CD8-positive, alpha-beta memory T cell (primary cell): ENCODE measurements at regions of chr11 and their contacts with region 1.

Region 1: GRCh38 chr11:250740-251299 is 14.0 kb downstream of the PSMD13 start:
- DNase-seq: peak; percentile 65 to 86 (median 71)
- H3K4me3 ChIP-seq: no peak overlapping the region
- H3K4me3 Mint-ChIP-seq: peak overlapping the region in 1 of 7 donors; percentile 5
- H3K27ac ChIP-seq: no peak overlapping the region
- H3K27ac Mint-ChIP-seq: peak overlapping the region in 7 of 8 donors; percentile 62 to 90 (median 73)
- H3K4me1 ChIP-seq: peaks cover 5% of the 10 kb centered on the region
- H3K4me1 Mint-ChIP-seq: peaks cover 7 to 11% (median 9%) of the 10 kb centered on the region in 3 donors
- H3K27me3 ChIP-seq: no peaks in the 10 kb centered on the region
- H3K27me3 Mint-ChIP-seq: no peaks in the 10 kb centered on the region

Region 2: DNA sequence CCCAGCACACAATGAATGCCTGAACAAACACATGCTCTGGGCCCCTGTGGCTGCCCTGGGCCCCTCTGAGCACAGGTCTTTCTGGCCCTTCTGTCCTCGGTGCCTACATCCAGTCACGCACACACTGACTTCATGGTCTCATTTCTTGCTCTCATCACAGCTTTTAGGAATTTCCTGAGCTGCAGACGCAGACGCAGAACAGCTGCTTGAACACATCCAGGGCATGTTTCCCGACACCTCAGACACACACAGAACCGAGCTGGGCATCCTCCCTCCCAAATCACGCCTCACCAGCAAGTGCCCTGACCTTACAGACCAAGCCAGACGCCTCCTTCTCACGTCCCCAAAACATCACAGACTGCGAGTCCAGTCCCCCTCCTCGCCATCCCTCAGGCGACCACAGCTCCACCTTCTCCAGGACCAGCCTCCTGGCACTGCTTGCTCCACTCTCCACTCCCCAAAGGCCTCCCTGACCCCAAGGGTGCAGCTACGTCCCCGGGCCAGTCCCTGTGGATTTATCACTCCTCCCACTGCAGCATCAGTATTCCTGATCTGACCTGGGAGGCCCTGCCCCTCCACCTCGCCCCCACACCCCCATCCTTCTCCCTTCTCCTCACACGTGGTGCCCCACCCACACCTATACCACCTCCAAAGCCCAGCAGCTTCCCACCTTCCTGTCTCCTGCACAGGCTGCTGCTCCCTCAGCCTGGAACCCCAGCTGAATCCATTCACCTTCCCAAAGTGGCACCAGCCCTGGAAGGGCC is 27.6 kb before region 1 on chr11:
- CTCF ChIA-PET with region 1: no interaction called
- POLR2A ChIA-PET with region 1: no interaction called
- DNase-seq: no peak
- H3K4me3 ChIP-seq: no peak overlapping the region
- H3K4me3 Mint-ChIP-seq: peak overlapping the region in 1 of 7 donors; percentile 2
- H3K27ac ChIP-seq: no peak overlapping the region
- H3K27ac Mint-ChIP-seq: peak overlapping the region in 4 of 8 donors; percentile 5 to 89 (median 62)
- H3K4me1 ChIP-seq: no peaks in the 10 kb centered on the region
- H3K4me1 Mint-ChIP-seq: peaks cover 0 to 5% (median 1%) of the 10 kb centered on the region in 3 donors
- H3K27me3 ChIP-seq: no peaks in the 10 kb centered on the region
- H3K27me3 Mint-ChIP-seq: no peaks in the 10 kb centered on the region

Region 3: GRCh38 chr11:269146-269890 is 18.5 kb after region 1 on chr11:
- CTCF ChIA-PET with region 1: interaction called, 34 read pairs
- POLR2A ChIA-PET with region 1: interaction called, 12 read pairs
- DNase-seq: peak; percentile 24 to 88 (median 72)
- H3K4me3 ChIP-seq: peak overlapping the region; percentile 49
- H3K4me3 Mint-ChIP-seq: peak overlapping the region; percentile 84 to 94 (median 90)
- H3K27ac ChIP-seq: peak overlapping the region; percentile 78
- H3K27ac Mint-ChIP-seq: peak overlapping the region; percentile 89 to 100 (median 96)
- H3K4me1 ChIP-seq: peaks cover 22% of the 10 kb centered on the region
- H3K4me1 Mint-ChIP-seq: peaks cover 30 to 43% (median 31%) of the 10 kb centered on the region in 3 donors
- H3K27me3 ChIP-seq: no peaks in the 10 kb centered on the region
- H3K27me3 Mint-ChIP-seq: peaks cover 0 to 2% of the 10 kb centered on the region in 2 donors

Region 4: GRCh38 chr11:288328-289144 is 37.7 kb after region 1 on chr11 and contains the start of gene PGGHG:
- CTCF ChIA-PET with region 1: interaction called, 25 read pairs
- POLR2A ChIA-PET with region 1: interaction called, 11 read pairs
- DNase-seq: peak; percentile 55 to 71 (median 67)
- H3K4me3 ChIP-seq: peak within 1 kb of the TSS; percentile 74
- H3K4me3 Mint-ChIP-seq: peak within 1 kb of the TSS; percentile 94 to 99 (median 98)
- H3K27ac ChIP-seq: peak within 1 kb of the TSS; percentile 79
- H3K27ac Mint-ChIP-seq: peak within 1 kb of the TSS; percentile 93 to 99 (median 97)
- H3K4me1 ChIP-seq: peaks cover 27% of the 10 kb centered on the region
- H3K4me1 Mint-ChIP-seq: peaks cover 29 to 59% (median 35%) of the 10 kb centered on the region in 3 donors
- H3K27me3 ChIP-seq: no peaks in the 10 kb centered on the region
- H3K27me3 Mint-ChIP-seq: peaks cover 0 to 9% of the 10 kb centered on the region in 2 donors
- total RNA-seq, gene PGGHG: 81.0 to 81.2 TPM

Region 5: GRCh38 chr11:304915-305843 is 54.4 kb after region 1 on chr11:
- CTCF ChIA-PET with region 1: interaction called, 30 read pairs
- POLR2A ChIA-PET with region 1: no interaction called
- DNase-seq: peak in 3 of 5 donors; percentile 60 to 80 (median 64)
- H3K4me3 ChIP-seq: no peak overlapping the region
- H3K4me3 Mint-ChIP-seq: peak overlapping the region in 4 of 7 donors; percentile 1 to 78 (median 53)
- H3K27ac ChIP-seq: no peak overlapping the region
- H3K27ac Mint-ChIP-seq: peak overlapping the region in 7 of 8 donors; percentile 18 to 92 (median 66)
- H3K4me1 ChIP-seq: peaks cover 40% of the 10 kb centered on the region
- H3K4me1 Mint-ChIP-seq: peaks cover 41 to 58% (median 49%) of the 10 kb centered on the region in 3 donors
- H3K27me3 ChIP-seq: no peaks in the 10 kb centered on the region
- H3K27me3 Mint-ChIP-seq: peaks cover 0 to 5% of the 10 kb centered on the region in 2 donors

Region 6: DNA sequence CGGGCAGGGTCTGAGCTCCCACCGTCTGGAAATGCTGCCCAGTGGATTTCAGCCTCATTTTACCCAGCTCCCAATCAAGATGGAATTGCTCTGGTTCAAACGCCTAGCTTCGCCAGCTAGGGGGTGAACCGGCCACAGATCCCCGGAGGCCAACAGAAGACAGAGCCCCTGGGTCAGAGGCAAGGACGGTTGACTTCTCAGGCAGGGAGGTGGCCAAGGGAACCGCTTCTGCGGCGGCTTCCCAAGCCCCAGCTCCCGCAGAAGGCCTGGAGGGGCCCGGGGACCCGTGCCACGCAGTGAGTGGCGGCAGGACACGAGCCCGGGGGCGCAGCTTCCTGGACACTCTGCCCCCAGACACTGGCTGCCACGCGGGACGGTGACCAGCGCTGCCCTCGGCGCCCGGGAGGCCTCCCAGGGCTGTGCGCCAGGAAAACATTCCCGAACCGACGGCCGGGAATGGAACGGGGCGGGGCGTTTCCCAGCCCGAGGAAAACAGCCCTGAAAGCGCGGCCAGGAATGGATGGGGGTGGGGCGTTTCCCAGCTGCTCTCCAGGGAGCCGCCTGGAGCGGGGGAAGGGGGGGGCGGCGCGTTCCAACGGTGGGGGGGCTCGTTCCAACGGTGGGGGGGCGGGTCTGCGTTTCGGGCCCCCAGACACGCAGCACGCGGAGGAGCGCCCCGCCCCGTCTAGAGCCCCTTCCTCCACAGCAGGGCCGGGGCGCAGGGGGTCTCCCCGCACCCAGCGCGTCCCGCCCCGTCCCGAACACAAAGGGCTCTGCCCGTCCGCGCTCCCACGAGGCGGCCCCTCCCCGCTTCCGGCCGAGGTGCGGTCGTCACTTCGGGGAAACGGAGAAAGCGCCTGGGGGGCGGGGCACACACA is 105.0 kb after region 1 on chr11:
- CTCF ChIA-PET with region 1: interaction called, 12 read pairs
- POLR2A ChIA-PET with region 1: no interaction called
- DNase-seq: peak; percentile 75 to 90 (median 84)
- H3K4me3 ChIP-seq: peak overlapping the region; percentile 84
- H3K4me3 Mint-ChIP-seq: peak overlapping the region; percentile 63 to 85 (median 81)
- H3K27ac ChIP-seq: peak overlapping the region; percentile 82
- H3K27ac Mint-ChIP-seq: peak overlapping the region; percentile 78 to 99 (median 94)
- H3K4me1 ChIP-seq: peaks cover 25% of the 10 kb centered on the region
- H3K4me1 Mint-ChIP-seq: peaks cover 47 to 49% (median 48%) of the 10 kb centered on the region in 3 donors
- H3K27me3 ChIP-seq: no peaks in the 10 kb centered on the region
- H3K27me3 Mint-ChIP-seq: no peaks in the 10 kb centered on the region

Region 7: GRCh38 chr11:406978-407739 is 156.3 kb after region 1 on chr11:
- CTCF ChIA-PET with region 1: interaction called, 13 read pairs
- POLR2A ChIA-PET with region 1: no interaction called
- DNase-seq: peak; percentile 94 to 98 (median 96)
- H3K4me3 ChIP-seq: peak overlapping the region; percentile 43
- H3K4me3 Mint-ChIP-seq: peak overlapping the region in 6 of 7 donors; percentile 24 to 78 (median 35)
- H3K27ac ChIP-seq: peak overlapping the region; percentile 70
- H3K27ac Mint-ChIP-seq: peak overlapping the region; percentile 34 to 91 (median 74)
- H3K4me1 ChIP-seq: peaks cover 20% of the 10 kb centered on the region
- H3K4me1 Mint-ChIP-seq: peaks cover 0 to 32% (median 12%) of the 10 kb centered on the region in 3 donors
- H3K27me3 ChIP-seq: no peaks in the 10 kb centered on the region
- H3K27me3 Mint-ChIP-seq: no peaks in the 10 kb centered on the region